ENCODE measurements at regions of chr5 and their contacts with region 1.

Region 1: DNA sequence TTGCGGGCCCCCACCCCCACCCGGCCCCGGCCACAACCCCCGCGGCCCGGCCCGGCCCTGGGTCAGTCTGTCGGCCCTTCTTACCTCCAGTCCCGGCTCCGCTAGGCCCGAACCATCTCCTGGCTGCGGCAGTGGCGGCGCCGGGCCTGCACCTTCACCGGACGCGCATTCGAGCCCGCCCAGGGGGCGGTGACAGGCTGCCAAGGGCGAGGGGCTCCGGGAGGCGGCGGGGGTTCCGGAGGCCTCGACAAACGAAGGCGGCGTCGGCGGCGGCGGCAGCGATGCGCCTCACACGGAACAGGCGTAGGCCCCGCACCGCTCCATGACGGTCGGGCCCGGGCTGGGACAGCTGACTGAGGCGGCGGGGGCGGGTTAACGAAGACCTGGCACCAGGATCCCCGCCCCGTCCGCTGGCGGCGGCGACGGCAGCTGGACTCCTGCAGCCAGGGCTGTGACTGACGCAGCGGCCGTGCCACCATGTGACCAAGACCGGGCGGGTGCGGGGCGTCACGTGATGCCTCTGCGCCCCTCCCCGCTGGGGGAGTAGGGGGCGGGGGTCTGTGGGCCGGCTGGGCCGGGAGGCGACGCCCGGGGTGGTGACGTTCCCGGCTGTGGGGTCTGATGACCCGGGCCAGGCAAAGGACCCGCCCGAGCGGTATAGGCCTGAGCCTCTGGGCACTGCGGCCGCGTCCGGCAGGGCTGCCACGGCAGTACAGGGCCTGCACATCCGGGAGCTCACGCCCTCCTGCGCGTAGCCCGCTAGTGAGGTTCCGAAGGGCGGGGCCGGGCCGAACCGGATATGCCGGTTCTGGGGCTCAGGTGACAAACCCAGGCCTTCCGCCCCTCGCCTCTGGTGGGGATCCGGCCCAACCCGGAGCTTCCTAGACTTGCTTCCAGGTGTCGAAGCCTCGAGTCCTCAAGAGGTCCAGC is at the start of gene AFF4:
- DNase-seq: peak; percentile 96
- H3K4me3 Mint-ChIP-seq: peak within 1 kb of the TSS; percentile 92
- H3K27ac Mint-ChIP-seq: peak within 1 kb of the TSS; percentile 93
- H3K4me1 Mint-ChIP-seq: peaks cover 20% of the 10 kb centered on the region
- H3K27me3 Mint-ChIP-seq: peaks cover 2% of the 10 kb centered on the region
- total RNA-seq, gene AFF4: 32.3 and 32.7 TPM in 2 replicates

Region 2: DNA sequence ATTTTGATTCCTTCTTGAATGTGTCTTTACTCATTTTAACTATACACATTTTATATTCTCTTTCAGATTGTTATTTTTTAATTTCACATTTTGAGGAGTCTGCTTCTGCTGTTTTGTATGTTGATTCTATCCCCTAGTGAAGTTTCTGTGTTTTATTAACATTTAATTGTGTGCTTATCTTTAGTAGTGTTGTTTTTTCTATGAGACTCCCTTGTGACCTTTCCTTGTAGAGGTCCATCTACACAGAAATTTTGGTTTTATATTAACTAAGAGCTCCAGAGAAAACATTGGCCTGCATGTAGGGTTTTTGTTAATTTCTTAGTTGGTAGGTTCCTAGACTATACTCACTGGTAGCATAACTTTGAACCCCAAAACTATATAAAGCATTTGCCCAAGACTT is 340.8 kb before region 1 on chr5:
- intact Hi-C with region 1: no loop called
- DNase-seq: no peak
- H3K4me3 Mint-ChIP-seq: no peak overlapping the region
- H3K27ac Mint-ChIP-seq: peak overlapping the region; percentile 5
- H3K4me1 Mint-ChIP-seq: peaks cover 7% of the 10 kb centered on the region
- H3K27me3 Mint-ChIP-seq: no peaks in the 10 kb centered on the region

Region 3: DNA sequence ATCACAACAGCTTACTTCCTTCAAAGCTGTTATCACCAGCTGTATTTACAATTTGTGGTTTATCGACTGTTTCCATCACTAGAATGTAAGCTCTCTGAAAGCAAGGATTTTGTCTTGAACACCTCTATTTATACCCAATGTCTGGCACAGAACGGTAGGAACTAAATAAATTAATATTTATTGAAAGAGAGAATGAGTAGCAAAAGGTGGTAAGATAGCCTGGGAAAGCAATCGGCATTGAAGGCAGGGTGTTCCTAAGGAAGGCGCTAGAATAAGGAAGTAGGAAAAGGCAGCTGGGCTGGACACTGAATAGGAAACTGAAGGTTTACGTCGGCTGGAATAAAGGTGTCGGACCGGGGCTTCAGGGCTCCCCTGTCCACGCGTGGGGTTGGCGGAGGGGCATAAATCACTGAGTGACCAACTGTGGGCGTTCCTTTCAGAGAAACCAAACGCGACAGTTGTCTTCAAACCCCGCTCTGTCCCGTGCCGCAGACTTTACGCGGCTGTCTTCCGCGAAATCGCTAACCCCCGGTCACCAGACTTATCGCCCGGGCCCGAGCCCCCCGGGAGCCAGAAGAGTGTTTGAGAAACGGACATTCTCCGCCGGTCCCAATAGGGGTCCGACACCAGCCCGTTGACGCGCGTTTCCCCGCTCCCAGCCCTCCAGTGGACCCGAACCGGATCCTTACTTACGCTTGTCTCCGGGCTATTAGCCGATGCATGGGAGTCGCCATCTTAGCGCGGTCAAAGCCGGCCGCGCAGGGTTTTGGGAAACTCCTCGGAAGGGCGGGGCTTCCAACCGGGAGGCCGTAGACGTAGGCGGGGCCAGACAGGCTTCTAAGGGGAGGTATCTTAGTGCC is 62.6 kb after region 1 on chr5 and contains the start of gene ZCCHC10:
- intact Hi-C with region 1: loop called (anchors 1 kb)
- DNase-seq: peak; percentile 98
- H3K4me3 Mint-ChIP-seq: peak within 1 kb of the TSS; percentile 88
- H3K27ac Mint-ChIP-seq: peak within 1 kb of the TSS; percentile 91
- H3K4me1 Mint-ChIP-seq: peaks cover 13% of the 10 kb centered on the region
- H3K27me3 Mint-ChIP-seq: peaks cover 6% of the 10 kb centered on the region
- total RNA-seq, gene ZCCHC10: 32.2 and 36.0 TPM in 2 replicates

Region 4: DNA sequence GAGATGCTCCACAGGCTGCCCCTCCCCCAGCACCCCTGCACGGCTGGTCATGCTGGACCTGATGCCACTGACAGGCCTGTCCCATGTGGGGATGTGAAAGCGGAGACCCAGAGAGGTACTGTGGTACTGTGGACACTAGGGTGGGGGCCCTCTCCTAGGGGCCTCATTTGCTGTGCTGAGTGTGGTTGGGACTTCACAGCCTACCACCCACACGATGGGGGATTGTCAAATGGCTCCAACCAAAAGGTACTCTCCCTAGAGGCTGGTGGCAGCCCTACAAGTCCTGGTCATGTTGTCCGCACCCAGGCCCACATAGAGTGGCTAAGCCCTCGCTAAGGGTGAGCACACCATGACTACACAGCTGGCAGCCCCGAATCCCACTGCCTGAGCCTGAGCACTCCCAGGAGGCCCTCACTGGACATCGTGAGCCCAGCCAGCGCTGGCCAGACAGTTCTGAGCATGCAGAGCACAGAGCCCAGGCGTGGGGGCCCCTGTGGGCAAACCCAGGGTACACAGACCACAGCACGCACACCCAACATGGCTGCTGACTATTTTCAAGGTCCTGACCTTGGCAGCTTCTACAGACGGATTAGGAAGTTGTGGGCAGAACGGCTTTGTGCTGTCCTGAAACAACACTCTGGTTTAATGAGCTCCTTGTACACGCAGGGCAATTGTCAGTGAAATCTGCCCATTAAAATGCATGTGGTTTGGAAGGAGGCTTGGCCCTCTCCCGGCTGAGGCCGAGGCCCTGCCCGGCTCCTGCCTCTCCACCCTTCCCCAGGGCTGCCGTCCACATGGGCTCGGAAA is 302.5 kb after region 1 on chr5:
- intact Hi-C with region 1: no loop called
- DNase-seq: no peak
- H3K4me3 Mint-ChIP-seq: no peak overlapping the region
- H3K27ac Mint-ChIP-seq: no peak overlapping the region
- H3K4me1 Mint-ChIP-seq: no peaks in the 10 kb centered on the region
- H3K27me3 Mint-ChIP-seq: peaks cover 10% of the 10 kb centered on the region